Naive thymus-derived CD4-positive, alpha-beta T cell (primary cell): ENCODE measurements at regions of chr11 and their contacts with region 1.

Region 1: GRCh38 chr11:28323621-28324020 is 215.4 kb downstream of the METTL15 start:
- DNase-seq: no peak
- ATAC-seq: no peak
- H3K4me3 ChIP-seq: no peak overlapping the region
- H3K4me3 Mint-ChIP-seq: no peak overlapping the region
- H3K27ac ChIP-seq: no peak overlapping the region
- H3K27ac Mint-ChIP-seq: peak overlapping the region in 1 of 9 donors; percentile 10
- H3K4me1 ChIP-seq: no peaks in the 10 kb centered on the region
- H3K4me1 Mint-ChIP-seq: peaks cover 0 to 3% (median 0%) of the 10 kb centered on the region in 7 donors
- H3K27me3 ChIP-seq: no peaks in the 10 kb centered on the region
- H3K27me3 Mint-ChIP-seq: no peaks in the 10 kb centered on the region

Region 2: GRCh38 chr11:28049338-28050216 is 274.0 kb before region 1 on chr11:
- CTCF ChIA-PET with region 1: no interaction called
- POLR2A ChIA-PET with region 1: no interaction called
- intact Hi-C with region 1: loop called in 1 of 2 experiments (anchors 10 kb)
- DNase-seq: no peak
- ATAC-seq: no peak
- H3K4me3 ChIP-seq: no peak overlapping the region
- H3K4me3 Mint-ChIP-seq: no peak overlapping the region
- H3K27ac ChIP-seq: no peak overlapping the region
- H3K27ac Mint-ChIP-seq: no peak overlapping the region
- H3K4me1 ChIP-seq: no peaks in the 10 kb centered on the region
- H3K4me1 Mint-ChIP-seq: peaks cover 0 to 8% (median 0%) of the 10 kb centered on the region in 7 donors
- H3K27me3 ChIP-seq: no peaks in the 10 kb centered on the region
- H3K27me3 Mint-ChIP-seq: no peaks in the 10 kb centered on the region

Region 3: GRCh38 chr11:29251738-29252137 is 928.1 kb after region 1 on chr11:
- CTCF ChIA-PET with region 1: no interaction called
- POLR2A ChIA-PET with region 1: no interaction called
- intact Hi-C with region 1: no loop called
- DNase-seq: no peak
- ATAC-seq: no peak
- H3K4me3 ChIP-seq: no peak overlapping the region
- H3K4me3 Mint-ChIP-seq: no peak overlapping the region
- H3K27ac ChIP-seq: no peak overlapping the region
- H3K27ac Mint-ChIP-seq: no peak overlapping the region
- H3K4me1 ChIP-seq: no peaks in the 10 kb centered on the region
- H3K4me1 Mint-ChIP-seq: no peaks in the 10 kb centered on the region
- H3K27me3 ChIP-seq: no peaks in the 10 kb centered on the region
- H3K27me3 Mint-ChIP-seq: no peaks in the 10 kb centered on the region